Heart right ventricle (tissue), 16 donors: ENCODE measurements at regions of chr9 and their contacts with region 1.

Region 1: GRCh38 chr9:76562511-76562911 is 103.5 kb downstream of the GCNT1 start:
- DNase-seq: no peak
- ATAC-seq: peak in 4 of 8 donors; percentile 34 to 69 (median 41)
- H3K4me3 ChIP-seq: no peak overlapping the region
- H3K27ac ChIP-seq: peak overlapping the region in 3 of 10 donors; percentile 3 to 72 (median 15)
- H3K4me1 ChIP-seq: peaks cover 0 to 59% (median 0%) of the 10 kb centered on the region in 9 donors
- H3K27me3 ChIP-seq: no peaks in the 10 kb centered on the region
- CTCF ChIP-seq: no peak

Region 2: GRCh38 chr9:75213765-75214164 is 1348.7 kb before region 1 on chr9:
- intact Hi-C with region 1: no loop called
- DNase-seq: no peak
- ATAC-seq: no peak
- H3K4me3 ChIP-seq: no peak overlapping the region
- H3K27ac ChIP-seq: no peak overlapping the region
- H3K4me1 ChIP-seq: no peaks in the 10 kb centered on the region
- H3K27me3 ChIP-seq: no peaks in the 10 kb centered on the region
- CTCF ChIP-seq: no peak

Region 3: GRCh38 chr9:76216161-76216649 is 346.3 kb before region 1 on chr9:
- intact Hi-C with region 1: no loop called
- DNase-seq: no peak
- ATAC-seq: no peak
- H3K4me3 ChIP-seq: no peak overlapping the region
- H3K27ac ChIP-seq: no peak overlapping the region
- H3K4me1 ChIP-seq: peaks cover 0 to 18% (median 0%) of the 10 kb centered on the region in 9 donors
- H3K27me3 ChIP-seq: peaks cover 0 to 59% (median 18%) of the 10 kb centered on the region in 7 donors
- CTCF ChIP-seq: no peak

Region 4: GRCh38 chr9:76458903-76459690 is 103.4 kb before region 1 on chr9 and contains the start of gene GCNT1:
- intact Hi-C with region 1: no loop called
- DNase-seq: peak; percentile 76 to 88
- ATAC-seq: peak; percentile 93 to 98 (median 96)
- H3K4me3 ChIP-seq: peak within 1 kb of the TSS; percentile 26 to 89 (median 71)
- H3K27ac ChIP-seq: peak within 1 kb of the TSS in 9 of 10 donors; percentile 25 to 80 (median 62)
- H3K4me1 ChIP-seq: peaks cover 0 to 55% (median 11%) of the 10 kb centered on the region in 9 donors
- H3K27me3 ChIP-seq: peaks cover 0 to 6% (median 0%) of the 10 kb centered on the region in 7 donors
- CTCF ChIP-seq: peak in 8 of 9 donors; percentile 21 to 71 (median 47)
- total RNA-seq, gene GCNT1: 0.66 to 8.1 (median 2.3) TPM

Region 5: GRCh38 chr9:76643399-76644117 is 81.0 kb after region 1 on chr9:
- intact Hi-C with region 1: loop called in 1 of 10 experiments (anchors 10 kb)
- DNase-seq: no peak
- ATAC-seq: peak in 6 of 8 donors; percentile 33 to 81 (median 58)
- H3K4me3 ChIP-seq: no peak overlapping the region
- H3K27ac ChIP-seq: peak overlapping the region in 3 of 10 donors; percentile 5 to 71 (median 6)
- H3K4me1 ChIP-seq: peaks cover 0 to 28% (median 0%) of the 10 kb centered on the region in 9 donors
- H3K27me3 ChIP-seq: no peaks in the 10 kb centered on the region
- CTCF ChIP-seq: no peak